Activated CD4-positive, alpha-beta T cell treated with anti-CD3 and anti-CD28 coated beads, Interleukin-2, amount 10 ng/mL, durations not matched to agents 24 days and 14 days (primary cell): ENCODE measurements at regions of chr2 and their contacts with region 1.

Region 1: GRCh38 chr2:222707689-222708525 is 36.4 kb downstream of the MOGAT1 start:
- DNase-seq: peak; percentile 92
- H3K4me3 Mint-ChIP-seq: no peak overlapping the region
- H3K27ac Mint-ChIP-seq: no peak overlapping the region
- H3K4me1 Mint-ChIP-seq: peaks cover 17% of the 10 kb centered on the region
- H3K27me3 Mint-ChIP-seq: peaks cover 34% of the 10 kb centered on the region

Region 2: GRCh38 chr2:222690564-222691200 is 17.2 kb before region 1 on chr2:
- intact Hi-C with region 1: loop called (anchors 2 kb)
- DNase-seq: peak; percentile 92
- H3K4me3 Mint-ChIP-seq: no peak overlapping the region
- H3K27ac Mint-ChIP-seq: no peak overlapping the region
- H3K4me1 Mint-ChIP-seq: peaks cover 12% of the 10 kb centered on the region
- H3K27me3 Mint-ChIP-seq: peaks cover 17% of the 10 kb centered on the region

Region 3: DNA sequence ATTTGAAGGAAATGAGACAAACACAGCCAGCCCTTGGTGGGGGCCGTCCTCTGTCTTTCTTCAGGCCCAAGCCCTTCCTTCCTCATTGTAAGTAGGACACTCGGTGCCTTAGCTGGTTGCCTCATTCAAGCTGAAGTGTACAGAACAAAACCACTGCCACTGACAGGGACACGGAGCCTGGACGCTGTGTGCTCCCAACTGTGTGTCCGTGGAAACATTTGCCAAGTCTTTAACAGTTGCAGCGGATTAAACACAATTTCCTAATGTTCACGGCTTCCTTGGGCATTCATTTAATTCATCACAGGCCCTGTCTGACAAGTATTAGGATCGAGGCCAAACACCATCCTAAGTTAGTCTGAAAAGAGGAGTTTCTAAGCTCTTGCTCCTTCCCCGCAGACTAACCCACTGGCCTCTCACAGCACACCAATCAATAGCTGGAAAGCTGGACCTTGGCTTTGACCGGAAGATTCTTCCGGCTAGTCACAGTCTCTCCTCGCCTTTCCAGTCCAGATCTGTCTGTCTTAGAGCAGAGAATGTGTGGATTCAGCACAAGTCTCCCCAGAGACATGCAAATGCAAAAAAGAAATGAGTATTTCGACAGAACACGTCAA is 84.2 kb after region 1 on chr2:
- intact Hi-C with region 1: loop called (anchors 5 kb)
- DNase-seq: no peak
- H3K4me3 Mint-ChIP-seq: no peak overlapping the region
- H3K27ac Mint-ChIP-seq: no peak overlapping the region
- H3K4me1 Mint-ChIP-seq: peaks cover 11% of the 10 kb centered on the region
- H3K27me3 Mint-ChIP-seq: peaks cover 2% of the 10 kb centered on the region

Region 4: GRCh38 chr2:222813177-222813843 is 105.4 kb after region 1 on chr2:
- intact Hi-C with region 1: loop called (anchors 2 kb)
- DNase-seq: peak; percentile 62
- H3K4me3 Mint-ChIP-seq: peak overlapping the region; percentile 30
- H3K27ac Mint-ChIP-seq: peak overlapping the region; percentile 96
- H3K4me1 Mint-ChIP-seq: peaks cover 22% of the 10 kb centered on the region
- H3K27me3 Mint-ChIP-seq: peaks cover 4% of the 10 kb centered on the region

Region 5: GRCh38 chr2:222869252-222869560 is 161.3 kb after region 1 on chr2:
- intact Hi-C with region 1: no loop called
- DNase-seq: no peak
- H3K4me3 Mint-ChIP-seq: no peak overlapping the region
- H3K27ac Mint-ChIP-seq: no peak overlapping the region
- H3K4me1 Mint-ChIP-seq: peaks cover 6% of the 10 kb centered on the region
- H3K27me3 Mint-ChIP-seq: no peaks in the 10 kb centered on the region

Region 6: DNA sequence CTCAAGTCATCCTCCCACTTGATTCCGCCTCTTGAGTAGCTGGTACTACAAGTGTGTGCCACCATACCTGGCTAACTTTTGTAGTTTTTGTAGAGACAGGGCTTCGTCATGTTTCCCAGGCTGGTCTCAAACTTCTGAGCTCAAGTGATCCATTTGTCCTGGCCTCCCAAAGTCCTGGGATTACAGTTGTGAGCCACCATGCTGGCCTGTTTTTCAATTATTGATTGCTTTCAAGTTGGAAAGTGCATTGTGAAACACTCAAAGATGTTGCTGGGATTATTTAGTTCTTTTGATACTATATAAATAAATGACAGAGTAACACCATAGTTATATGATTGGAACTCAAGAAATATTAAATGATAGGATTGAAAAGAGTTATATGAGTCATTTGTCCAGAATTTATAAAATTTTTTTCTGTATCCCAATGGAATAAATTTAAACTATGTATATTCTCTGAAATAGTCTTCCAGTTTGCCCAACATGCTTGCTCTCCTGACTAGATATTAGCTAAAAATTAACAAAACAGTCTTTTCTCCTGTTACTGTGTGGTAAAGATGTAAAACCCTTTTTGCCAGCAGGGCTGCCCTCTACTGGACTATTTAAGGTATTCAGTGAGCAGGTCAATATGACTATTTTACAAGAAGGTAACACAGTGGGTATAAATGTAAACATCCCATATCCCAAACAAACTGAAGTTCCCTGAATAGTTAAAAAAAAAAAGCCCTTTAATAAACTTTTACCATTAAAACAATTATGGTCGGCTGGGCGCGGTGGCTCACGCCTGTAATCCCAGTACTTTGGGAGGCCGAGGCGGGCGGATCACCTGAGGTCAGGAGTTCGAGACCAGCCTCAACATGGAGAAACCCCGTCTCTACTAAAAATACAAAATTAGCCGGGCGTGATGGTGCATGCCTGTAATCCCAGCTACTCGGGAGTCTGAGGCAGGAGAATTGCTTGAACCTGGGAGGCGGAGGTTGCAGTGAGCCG is 195.6 kb after region 1 on chr2:
- intact Hi-C with region 1: loop called (anchors 1 kb)
- DNase-seq: peak; percentile 76
- H3K4me3 Mint-ChIP-seq: no peak overlapping the region
- H3K27ac Mint-ChIP-seq: no peak overlapping the region
- H3K4me1 Mint-ChIP-seq: peaks cover 12% of the 10 kb centered on the region
- H3K27me3 Mint-ChIP-seq: no peaks in the 10 kb centered on the region

Region 7: DNA sequence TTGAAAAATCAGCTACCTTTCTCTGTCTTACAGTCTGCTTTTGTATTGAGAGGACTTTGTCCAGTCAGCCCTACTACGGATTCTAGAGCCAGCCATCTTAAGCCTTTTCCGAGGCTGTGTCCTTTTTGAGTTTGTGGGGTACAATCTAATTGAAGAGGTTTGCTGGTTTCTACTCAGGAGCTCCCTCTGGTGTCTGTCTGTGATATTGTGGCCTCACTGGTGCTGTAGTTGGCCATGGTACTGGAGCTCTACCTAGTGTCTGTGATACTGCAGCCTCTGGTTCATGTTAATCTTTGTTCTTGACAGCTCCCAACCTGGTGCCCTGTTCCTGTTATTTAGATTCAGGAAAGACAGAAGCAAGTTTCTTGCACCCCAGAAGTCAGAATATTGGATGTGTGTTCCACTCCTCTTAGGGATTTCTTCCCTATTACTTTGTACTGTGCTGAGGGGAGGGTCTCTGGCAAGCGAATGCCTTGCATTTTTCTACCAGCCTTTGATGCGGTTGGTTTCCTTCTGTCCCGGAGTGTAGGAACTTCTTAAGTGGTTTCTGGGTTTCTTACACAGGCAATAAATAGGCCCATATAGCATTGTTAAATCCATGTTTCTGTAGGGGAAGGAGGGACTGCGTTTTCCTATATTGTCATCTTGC is 231.4 kb after region 1 on chr2:
- intact Hi-C with region 1: loop called (anchors 1 kb)
- DNase-seq: peak; percentile 91
- H3K4me3 Mint-ChIP-seq: no peak overlapping the region
- H3K27ac Mint-ChIP-seq: no peak overlapping the region
- H3K4me1 Mint-ChIP-seq: peaks cover 2% of the 10 kb centered on the region
- H3K27me3 Mint-ChIP-seq: no peaks in the 10 kb centered on the region